AG04449 (cell line): ENCODE measurements at regions of chr12 and their contacts with region 1.

Region 1: DNA sequence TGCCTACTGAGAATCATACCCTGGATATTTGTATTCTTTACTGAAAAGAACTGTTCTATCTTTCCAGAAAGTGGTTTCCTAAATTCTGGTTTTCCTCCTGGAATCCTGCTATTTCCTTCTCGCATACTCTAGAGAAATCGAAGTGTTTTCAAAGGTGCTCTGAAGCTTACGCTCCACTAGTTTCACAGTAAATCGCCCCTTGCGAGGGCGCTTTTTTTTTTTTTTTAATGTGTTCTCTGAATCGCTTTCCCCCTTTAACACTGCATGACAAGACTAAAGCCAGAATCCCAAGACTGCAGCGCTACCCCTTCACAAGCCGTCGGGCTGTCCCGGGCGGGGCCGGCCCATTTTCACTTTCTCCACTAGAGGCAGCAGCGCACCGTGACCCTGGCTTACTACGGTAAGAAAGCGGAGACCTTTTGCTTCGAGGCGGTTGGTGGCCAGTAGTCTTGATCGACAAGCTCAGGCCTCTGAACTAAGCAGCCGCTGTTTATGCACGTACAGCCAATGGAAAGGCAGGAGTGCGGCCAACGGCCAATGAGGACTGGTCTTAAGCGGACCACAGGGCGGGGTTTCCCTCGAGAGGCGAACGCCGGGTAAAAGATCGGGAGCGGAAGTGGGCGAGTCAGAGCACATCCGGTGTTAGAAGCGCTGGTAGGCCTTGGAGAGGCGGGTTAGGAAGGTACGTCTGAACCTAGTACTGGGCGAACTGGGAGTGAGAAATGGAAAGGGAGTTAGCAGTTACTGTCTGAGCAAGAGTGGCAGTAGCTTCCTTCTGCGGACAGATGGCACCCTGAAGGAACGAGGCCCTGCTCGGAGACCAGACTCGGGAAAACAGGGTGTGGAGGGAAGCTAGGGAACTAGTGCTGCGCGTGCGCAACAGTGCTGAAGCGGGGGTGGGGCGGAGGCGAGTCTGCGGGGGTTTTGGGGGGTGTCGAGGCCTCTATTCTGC is at the start of gene TMBIM6:
- DNase-seq: peak; percentile 100
- H3K4me3 ChIP-seq: peak within 1 kb of the TSS; percentile 91
- CTCF ChIP-seq: peak; percentile 91

Region 2: GRCh38 chr12:49623142-49623904 is 117.9 kb before region 1 on chr12 and contains the start of gene PRPF40B:
- CTCF ChIA-PET with region 1: interaction called, 13 read pairs
- POLR2A ChIA-PET with region 1: interaction called, 8 read pairs
- DNase-seq: no peak
- H3K4me3 ChIP-seq: peak within 1 kb of the TSS; percentile 65
- CTCF ChIP-seq: peak; percentile 75

Region 3: DNA sequence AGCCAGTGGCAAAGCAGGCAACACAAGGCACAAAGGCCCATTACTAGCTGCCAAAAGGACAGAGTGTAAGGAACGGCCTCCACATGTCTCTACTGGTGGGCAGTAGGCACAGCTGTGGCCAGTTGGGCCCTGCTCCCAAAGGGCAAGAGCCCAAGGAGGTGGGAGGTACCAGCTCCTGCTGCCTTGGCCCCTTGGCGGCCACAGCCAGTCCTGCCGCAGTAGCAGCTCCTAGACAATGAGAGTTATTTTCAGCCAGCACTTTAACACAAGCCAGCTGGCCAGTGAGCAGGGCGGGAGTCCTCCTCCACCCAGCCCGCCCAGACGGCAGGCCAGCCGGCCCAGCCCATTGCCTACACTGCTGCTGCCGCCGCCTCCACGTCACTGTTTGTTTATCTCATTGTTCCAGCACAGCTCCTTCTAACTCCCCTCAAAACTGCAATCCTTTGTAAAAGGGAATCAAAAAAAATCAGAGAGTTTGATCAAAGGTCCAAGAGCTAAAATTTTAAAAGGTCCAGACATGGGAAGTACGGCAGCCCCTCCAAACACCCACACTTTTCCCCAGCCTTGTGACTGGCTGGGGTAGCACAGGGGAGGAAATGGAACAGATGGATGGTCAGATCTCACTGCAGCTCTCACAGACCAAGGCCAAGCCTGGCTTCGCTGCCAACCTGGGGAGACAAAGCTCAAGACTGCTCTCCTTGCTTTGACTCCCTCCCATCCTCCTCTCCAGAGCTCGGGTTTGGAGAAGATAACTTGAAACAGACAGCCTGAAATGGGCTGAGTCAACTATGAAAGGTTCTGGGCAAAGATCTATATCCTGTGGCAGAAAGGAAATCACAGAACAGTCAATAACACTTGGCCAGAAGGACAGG is 67.5 kb before region 1 on chr12:
- CTCF ChIA-PET with region 1: interaction called, 5 read pairs
- POLR2A ChIA-PET with region 1: interaction called, 12 read pairs
- DNase-seq: no peak
- H3K4me3 ChIP-seq: peak overlapping the region; percentile 16; the same call in 1 of the 2 replicates
- CTCF ChIP-seq: peak; percentile 36

Region 4: GRCh38 chr12:49707128-49707811 is 33.9 kb before region 1 on chr12 and contains the start of gene FMNL3:
- CTCF ChIA-PET with region 1: interaction called, 40 read pairs
- POLR2A ChIA-PET with region 1: interaction called, 6 read pairs
- DNase-seq: peak; percentile 59
- H3K4me3 ChIP-seq: peak within 1 kb of the TSS; percentile 70
- CTCF ChIP-seq: peak; percentile 90

Region 5: DNA sequence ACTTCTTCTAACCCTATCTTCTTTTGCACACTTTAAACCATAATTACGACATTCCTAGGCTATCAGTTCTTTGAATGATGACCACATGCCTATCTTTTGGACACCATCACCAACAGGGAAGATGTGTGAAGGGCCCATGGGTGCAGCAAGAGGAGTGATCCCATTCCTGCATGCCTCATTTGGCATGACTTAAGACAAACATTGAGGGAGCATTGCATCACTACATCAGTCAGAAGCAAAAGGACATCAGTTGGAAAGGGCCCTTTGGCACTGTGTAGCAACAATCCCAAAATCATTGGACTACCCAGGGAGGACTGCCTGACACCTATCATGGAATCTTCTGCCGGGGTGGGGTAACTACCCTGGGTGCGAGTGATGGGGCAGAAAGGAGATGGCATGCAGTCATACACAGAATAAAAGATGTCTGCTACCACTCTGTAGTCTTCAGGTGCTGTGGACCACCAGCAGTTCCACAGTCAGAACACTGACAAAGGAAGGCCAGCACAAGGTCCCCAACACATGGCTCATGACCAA is 10.6 kb before region 1 on chr12:
- CTCF ChIA-PET with region 1: interaction called, 13 read pairs
- POLR2A ChIA-PET with region 1: interaction called, 8 read pairs
- DNase-seq: no peak
- H3K4me3 ChIP-seq: no peak overlapping the region
- CTCF ChIP-seq: no peak

Region 6: GRCh38 chr12:49763006-49763591 is 21.9 kb after region 1 on chr12:
- CTCF ChIA-PET with region 1: interaction called, 47 read pairs
- POLR2A ChIA-PET with region 1: interaction called, 6 read pairs
- DNase-seq: no peak
- H3K4me3 ChIP-seq: no peak overlapping the region
- CTCF ChIP-seq: peak; percentile 82

Region 7: DNA sequence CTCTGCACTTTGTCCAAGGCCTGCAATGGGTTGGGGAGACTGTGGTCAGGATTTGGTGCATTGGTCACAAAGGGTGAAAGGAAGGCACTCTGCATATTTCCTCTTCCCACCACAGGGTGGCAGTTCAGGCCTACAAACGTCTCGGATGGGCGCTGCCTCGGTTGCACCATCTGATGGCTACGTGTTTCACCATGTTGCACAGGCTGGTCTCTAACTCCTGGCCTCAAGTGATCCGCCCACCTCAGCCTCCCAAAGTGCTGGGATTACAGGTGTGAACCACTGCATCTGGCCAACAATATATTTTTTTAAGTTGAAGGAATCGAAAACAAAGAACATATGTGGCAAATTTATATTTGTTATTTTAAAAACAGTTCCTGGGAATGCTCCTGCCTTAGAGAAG is 35.2 kb after region 1 on chr12:
- CTCF ChIA-PET with region 1: interaction called, 12 read pairs
- POLR2A ChIA-PET with region 1: no interaction called
- DNase-seq: no peak
- H3K4me3 ChIP-seq: no peak overlapping the region
- CTCF ChIP-seq: peak; percentile 83